CD8-positive, alpha-beta T cell (primary cell): ENCODE measurements at regions of chr11 and their contacts with region 1.

Region 1: GRCh38 chr11:62591448-62592145 is at the start of gene TUT1:
- DNase-seq: peak; percentile 92 to 100 (median 96)
- ATAC-seq: peak; percentile 87
- H3K4me3 ChIP-seq: peak within 1 kb of the TSS; percentile 72 to 79
- H3K4me3 Mint-ChIP-seq: peak within 1 kb of the TSS; percentile 95
- H3K27ac ChIP-seq: peak within 1 kb of the TSS; percentile 87 to 93
- H3K27ac Mint-ChIP-seq: peak within 1 kb of the TSS; percentile 98
- H3K4me1 ChIP-seq: peaks cover 32% of the 10 kb centered on the region
- H3K4me1 Mint-ChIP-seq: peaks cover 48% of the 10 kb centered on the region
- H3K27me3 ChIP-seq: no peaks in the 10 kb centered on the region
- H3K27me3 Mint-ChIP-seq: no peaks in the 10 kb centered on the region
- CTCF ChIP-seq: no peak
- total RNA-seq, gene TUT1: 15.3 to 17.7 TPM

Region 2: GRCh38 chr11:62427630-62428233 is 163.9 kb before region 1 on chr11:
- CTCF ChIA-PET with region 1: interaction called, 7 read pairs
- POLR2A ChIA-PET with region 1: interaction called, 5 read pairs
- intact Hi-C with region 1: loop called in 1 of 2 experiments (anchors 1 kb)
- DNase-seq: no peak
- ATAC-seq: no peak
- H3K4me3 ChIP-seq: no peak overlapping the region
- H3K4me3 Mint-ChIP-seq: no peak overlapping the region
- H3K27ac ChIP-seq: no peak overlapping the region
- H3K27ac Mint-ChIP-seq: peak overlapping the region; percentile 82
- H3K4me1 ChIP-seq: peaks cover 37% of the 10 kb centered on the region
- H3K4me1 Mint-ChIP-seq: peaks cover 44% of the 10 kb centered on the region
- H3K27me3 ChIP-seq: no peaks in the 10 kb centered on the region
- H3K27me3 Mint-ChIP-seq: no peaks in the 10 kb centered on the region
- CTCF ChIP-seq: no peak

Region 3: DNA sequence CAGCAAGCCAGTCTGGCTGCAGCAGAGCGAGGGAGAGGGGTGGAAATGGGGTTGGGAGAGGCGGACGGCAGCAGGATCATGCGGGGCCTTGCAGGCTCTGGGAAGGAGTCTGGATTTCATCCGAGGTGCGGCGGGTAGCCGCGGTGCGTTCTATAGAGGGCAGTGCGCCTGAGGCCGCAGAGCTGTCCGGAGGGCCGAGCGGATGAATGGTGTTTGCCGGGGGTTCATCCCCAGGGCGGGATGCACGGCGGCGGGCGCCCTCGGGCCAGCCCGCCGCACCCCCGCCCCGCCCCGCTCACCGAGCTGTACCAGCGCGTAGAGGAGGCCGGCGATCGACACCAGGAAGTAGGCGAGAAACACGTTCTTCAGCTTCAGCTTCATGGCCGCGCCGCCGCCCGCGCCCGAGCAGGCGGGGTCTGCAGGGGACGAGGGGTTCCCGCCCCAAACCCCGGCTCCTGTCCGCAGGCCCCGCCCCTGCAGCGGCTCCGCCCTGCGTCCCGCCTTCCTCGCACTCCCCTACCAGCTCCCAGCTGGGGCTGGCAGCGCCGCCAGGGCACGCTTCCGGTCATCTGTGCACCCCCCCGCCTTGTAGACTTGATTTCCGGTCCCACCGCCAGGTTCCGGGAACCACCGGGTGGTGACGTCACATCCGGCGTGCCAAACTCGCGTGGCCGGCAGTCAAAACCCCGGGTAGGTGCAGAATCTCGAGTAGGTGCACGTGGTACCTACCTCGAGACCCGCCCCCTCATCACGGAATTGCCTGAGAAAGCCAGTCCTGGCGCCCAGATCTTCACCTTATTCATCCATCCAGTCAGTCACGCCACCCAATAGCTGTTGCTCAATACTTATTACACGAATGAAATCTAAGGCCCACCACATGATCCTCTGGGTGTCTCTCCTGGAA is 30.2 kb after region 1 on chr11 and contains the start of gene B3GAT3:
- CTCF ChIA-PET with region 1: interaction called, 23 read pairs
- POLR2A ChIA-PET with region 1: interaction called, 59 read pairs
- intact Hi-C with region 1: loop called (anchors 1 kb)
- DNase-seq: peak; percentile 90 to 99 (median 97)
- ATAC-seq: peak; percentile 81
- H3K4me3 ChIP-seq: peak within 1 kb of the TSS; percentile 69 to 80
- H3K4me3 Mint-ChIP-seq: peak within 1 kb of the TSS; percentile 98
- H3K27ac ChIP-seq: peak within 1 kb of the TSS; percentile 78 to 88
- H3K27ac Mint-ChIP-seq: peak within 1 kb of the TSS; percentile 97
- H3K4me1 ChIP-seq: peaks cover 20% of the 10 kb centered on the region
- H3K4me1 Mint-ChIP-seq: peaks cover 30% of the 10 kb centered on the region
- H3K27me3 ChIP-seq: no peaks in the 10 kb centered on the region
- H3K27me3 Mint-ChIP-seq: no peaks in the 10 kb centered on the region
- CTCF ChIP-seq: no peak
- total RNA-seq, gene B3GAT3: 41.7 to 44.0 TPM

Region 4: GRCh38 chr11:62665075-62665598 is 73.5 kb after region 1 on chr11 and contains the starts of genes C11orf98 and CSKMT:
- CTCF ChIA-PET with region 1: interaction called, 14 read pairs
- POLR2A ChIA-PET with region 1: interaction called, 116 read pairs
- intact Hi-C with region 1: loop called (anchors 1 to 2 kb)
- DNase-seq: peak; percentile 92 to 98 (median 95)
- ATAC-seq: peak; percentile 87
- H3K4me3 ChIP-seq: peak within 1 kb of the TSS; percentile 95 to 97
- H3K4me3 Mint-ChIP-seq: peak within 1 kb of the TSS; percentile 96
- H3K27ac ChIP-seq: peak within 1 kb of the TSS; percentile 81 to 92
- H3K27ac Mint-ChIP-seq: peak within 1 kb of the TSS; percentile 93
- H3K4me1 ChIP-seq: peaks cover 31% of the 10 kb centered on the region
- H3K4me1 Mint-ChIP-seq: peaks cover 45% of the 10 kb centered on the region
- H3K27me3 ChIP-seq: no peaks in the 10 kb centered on the region
- H3K27me3 Mint-ChIP-seq: no peaks in the 10 kb centered on the region
- CTCF ChIP-seq: no peak
- total RNA-seq, gene C11orf98: 22.5 to 25.7 TPM
- total RNA-seq, gene CSKMT: 25.4 to 25.7 TPM

Region 5: DNA sequence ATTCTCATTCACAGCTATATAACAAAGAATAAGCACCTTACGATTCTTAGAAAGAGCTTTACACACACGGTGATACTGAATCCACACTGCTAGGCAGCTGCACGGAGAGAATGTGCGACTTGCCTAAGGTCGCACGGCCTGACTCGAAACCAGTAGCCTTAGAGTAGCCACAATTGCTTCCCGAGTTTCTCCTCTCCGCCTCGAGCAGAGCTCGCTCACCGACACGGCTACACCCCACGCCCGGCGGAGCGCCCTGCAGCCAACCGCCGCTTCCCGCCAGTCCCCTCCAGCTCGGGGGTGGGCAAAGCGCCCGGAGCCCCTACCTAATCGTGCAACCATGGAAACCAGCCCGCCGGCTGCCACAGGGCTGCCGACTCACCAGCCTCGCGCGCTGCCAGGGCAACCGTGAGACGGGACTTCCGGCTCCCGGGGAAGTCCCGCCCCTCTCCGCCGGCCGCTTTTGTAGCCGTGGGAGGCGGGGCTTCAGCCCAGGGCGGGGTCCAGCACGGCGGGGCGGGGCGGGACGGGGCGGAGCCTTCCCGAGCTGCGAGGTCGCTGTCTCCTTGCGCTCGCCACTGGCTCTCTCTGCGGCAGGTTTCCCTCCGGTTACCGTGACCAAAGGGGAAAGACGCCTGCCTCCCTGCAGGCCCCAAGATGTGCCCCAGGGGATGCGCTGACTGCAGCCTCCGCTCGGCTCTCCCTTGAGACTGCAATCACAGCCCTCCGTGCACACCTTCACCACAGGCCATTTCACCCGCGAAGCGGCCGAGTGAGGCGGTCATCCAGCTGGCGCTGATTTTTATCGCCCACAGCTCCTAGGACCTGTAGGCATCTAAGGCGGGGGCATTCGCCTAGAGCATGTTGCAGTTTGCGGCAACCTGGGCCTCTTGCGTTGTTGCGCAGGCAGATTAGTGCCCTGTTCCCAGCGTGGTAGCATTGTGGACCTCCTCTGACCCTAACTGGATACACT is 114.6 kb after region 1 on chr11:
- CTCF ChIA-PET with region 1: interaction called, 11 read pairs
- POLR2A ChIA-PET with region 1: interaction called, 46 read pairs
- intact Hi-C with region 1: loop called (anchors 1 kb)
- DNase-seq: peak; percentile 88 to 98 (median 95)
- ATAC-seq: peak; percentile 61
- H3K4me3 ChIP-seq: peak overlapping the region; percentile 56 to 59
- H3K4me3 Mint-ChIP-seq: peak overlapping the region; percentile 90
- H3K27ac ChIP-seq: peak overlapping the region; percentile 67 to 73
- H3K27ac Mint-ChIP-seq: peak overlapping the region; percentile 88
- H3K4me1 ChIP-seq: peaks cover 44% of the 10 kb centered on the region
- H3K4me1 Mint-ChIP-seq: peaks cover 44% of the 10 kb centered on the region
- H3K27me3 ChIP-seq: no peaks in the 10 kb centered on the region
- H3K27me3 Mint-ChIP-seq: no peaks in the 10 kb centered on the region
- CTCF ChIP-seq: no peak

Region 6: GRCh38 chr11:62841361-62842184 is 250.0 kb after region 1 on chr11:
- CTCF ChIA-PET with region 1: no interaction called
- POLR2A ChIA-PET with region 1: interaction called, 44 read pairs
- intact Hi-C with region 1: loop called in 1 of 2 experiments (anchors 5 kb)
- DNase-seq: peak; percentile 69 to 95 (median 80)
- ATAC-seq: peak; percentile 49
- H3K4me3 ChIP-seq: peak overlapping the region; percentile 61 to 79
- H3K4me3 Mint-ChIP-seq: no peak overlapping the region
- H3K27ac ChIP-seq: peak overlapping the region; percentile 97 to 99
- H3K27ac Mint-ChIP-seq: no peak overlapping the region
- H3K4me1 ChIP-seq: peaks cover 32% of the 10 kb centered on the region
- H3K4me1 Mint-ChIP-seq: peaks cover 25% of the 10 kb centered on the region
- H3K27me3 ChIP-seq: no peaks in the 10 kb centered on the region
- H3K27me3 Mint-ChIP-seq: no peaks in the 10 kb centered on the region
- CTCF ChIP-seq: no peak